Panc1 (cell line): ENCODE measurements at regions of chr18 and their contacts with region 1.

Region 1: DNA sequence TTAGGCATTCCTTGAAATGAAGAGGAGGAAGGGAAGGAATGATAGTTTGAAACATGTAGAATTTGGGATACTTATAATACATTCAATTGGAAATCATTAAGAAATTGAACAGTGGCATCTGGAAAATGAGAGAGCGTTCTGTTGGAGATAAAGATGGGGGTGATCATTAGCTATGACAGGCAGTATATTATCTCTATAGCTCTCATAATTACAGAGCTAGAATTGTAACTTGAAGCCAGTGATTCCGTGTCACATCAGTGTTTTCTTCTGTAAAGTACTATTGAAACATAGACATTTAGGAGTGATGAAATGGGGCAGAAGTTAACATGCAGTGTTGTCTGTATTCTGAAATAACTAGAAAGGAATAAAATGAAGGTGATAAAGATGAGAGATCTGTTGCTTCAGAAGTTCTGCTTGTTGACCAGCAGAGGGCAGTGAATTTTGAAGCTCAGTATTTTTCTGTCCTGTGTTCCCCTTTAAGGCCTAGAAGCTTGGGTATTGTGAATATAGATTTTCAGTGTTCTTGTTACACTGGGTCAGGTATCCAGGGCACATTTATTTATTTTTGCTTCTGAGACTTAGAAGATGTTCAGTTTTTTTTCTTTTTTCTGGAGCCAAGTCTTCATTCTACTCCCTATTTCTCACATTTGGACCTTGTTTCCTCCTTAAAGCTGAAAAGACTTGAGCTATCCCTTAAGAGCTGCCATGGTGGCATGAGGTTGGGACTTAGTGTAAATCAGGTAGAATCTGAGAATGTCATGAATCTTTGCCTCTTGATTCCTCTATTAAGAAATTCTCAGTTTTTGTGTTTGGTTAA is 157.4 kb downstream of the TAF4B start:
- DNase-seq: peak; percentile 15
- ATAC-seq: peak; percentile 78; the same call in 1 of the 2 replicates
- H3K4me3 ChIP-seq: no peak overlapping the region
- H3K27ac ChIP-seq: peak overlapping the region; percentile 60; the same call in 1 of the 2 replicates
- H3K4me1 ChIP-seq: peaks cover 7% of the 10 kb centered on the region; the same call in 1 of the 2 replicates
- H3K27me3 ChIP-seq: no peaks in the 10 kb centered on the region
- CTCF ChIP-seq: peak; percentile 71; the same call in 1 of the 2 replicates

Region 2: GRCh38 chr18:26233225-26233624 is 150.4 kb before region 1 on chr18:
- CTCF ChIA-PET with region 1: interaction called, 14 read pairs
- POLR2A ChIA-PET with region 1: no interaction called
- in situ Hi-C with region 1: no loop called
- intact Hi-C with region 1: no loop called
- DNase-seq: no peak
- ATAC-seq: no peak
- H3K4me3 ChIP-seq: no peak overlapping the region
- H3K27ac ChIP-seq: no peak overlapping the region
- H3K4me1 ChIP-seq: peaks cover 7% of the 10 kb centered on the region
- H3K27me3 ChIP-seq: no peaks in the 10 kb centered on the region
- CTCF ChIP-seq: no peak

Region 3: GRCh38 chr18:26548429-26549262 is 165.0 kb after region 1 on chr18 and contains the start of gene KCTD1:
- CTCF ChIA-PET with region 1: no interaction called
- POLR2A ChIA-PET with region 1: no interaction called
- in situ Hi-C with region 1: no loop called
- intact Hi-C with region 1: loop called (anchors 5 kb)
- DNase-seq: peak; percentile 30
- ATAC-seq: peak; percentile 67
- H3K4me3 ChIP-seq: peak within 1 kb of the TSS; percentile 71 to 77
- H3K27ac ChIP-seq: peak within 1 kb of the TSS; percentile 85
- H3K4me1 ChIP-seq: peaks cover 18% of the 10 kb centered on the region
- H3K27me3 ChIP-seq: no peaks in the 10 kb centered on the region
- CTCF ChIP-seq: no peak
- total RNA-seq, gene KCTD1: 34.4 TPM

Region 4: DNA sequence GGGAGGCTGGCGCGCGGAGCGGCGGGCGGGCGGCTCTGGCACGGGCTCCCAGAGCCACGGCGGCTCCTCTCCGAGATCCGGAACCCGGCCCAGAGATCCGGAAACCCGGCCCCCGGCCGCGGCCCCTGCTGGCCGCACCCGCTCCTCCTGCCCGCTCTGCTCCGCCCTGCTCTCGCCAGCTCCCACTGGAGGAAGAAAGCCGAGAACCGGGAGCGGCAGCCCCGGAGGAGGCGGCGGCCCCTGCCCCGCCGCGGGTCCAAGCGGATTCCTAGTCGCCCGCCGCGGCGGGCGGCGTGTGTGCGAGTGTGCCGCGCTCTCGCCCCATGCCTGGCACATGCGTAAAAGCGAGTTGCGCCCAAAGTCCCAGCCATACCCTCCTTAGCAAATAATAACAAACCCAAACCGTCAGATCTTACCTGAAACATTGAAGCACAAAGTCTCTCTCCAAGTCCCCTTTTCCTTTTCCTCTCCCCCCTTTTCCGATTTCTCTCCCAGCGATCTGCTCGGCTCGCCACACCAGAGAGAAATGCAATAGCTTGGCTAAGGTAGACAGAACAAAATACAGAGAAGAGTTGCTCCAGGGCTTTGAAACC is 273.4 kb after region 1 on chr18:
- CTCF ChIA-PET with region 1: no interaction called
- POLR2A ChIA-PET with region 1: no interaction called
- in situ Hi-C with region 1: no loop called
- intact Hi-C with region 1: loop called (anchors 10 kb)
- DNase-seq: no peak
- ATAC-seq: peak; percentile 88
- H3K4me3 ChIP-seq: peak overlapping the region; percentile 62 to 70
- H3K27ac ChIP-seq: peak overlapping the region; percentile 48; the same call in 1 of the 2 replicates
- H3K4me1 ChIP-seq: peaks cover 10% of the 10 kb centered on the region
- H3K27me3 ChIP-seq: peaks cover 49% of the 10 kb centered on the region
- CTCF ChIP-seq: peak; percentile 40